HEK293T (cell line): ENCODE measurements at regions of chr15 and their contacts with region 1.

Region 1: DNA sequence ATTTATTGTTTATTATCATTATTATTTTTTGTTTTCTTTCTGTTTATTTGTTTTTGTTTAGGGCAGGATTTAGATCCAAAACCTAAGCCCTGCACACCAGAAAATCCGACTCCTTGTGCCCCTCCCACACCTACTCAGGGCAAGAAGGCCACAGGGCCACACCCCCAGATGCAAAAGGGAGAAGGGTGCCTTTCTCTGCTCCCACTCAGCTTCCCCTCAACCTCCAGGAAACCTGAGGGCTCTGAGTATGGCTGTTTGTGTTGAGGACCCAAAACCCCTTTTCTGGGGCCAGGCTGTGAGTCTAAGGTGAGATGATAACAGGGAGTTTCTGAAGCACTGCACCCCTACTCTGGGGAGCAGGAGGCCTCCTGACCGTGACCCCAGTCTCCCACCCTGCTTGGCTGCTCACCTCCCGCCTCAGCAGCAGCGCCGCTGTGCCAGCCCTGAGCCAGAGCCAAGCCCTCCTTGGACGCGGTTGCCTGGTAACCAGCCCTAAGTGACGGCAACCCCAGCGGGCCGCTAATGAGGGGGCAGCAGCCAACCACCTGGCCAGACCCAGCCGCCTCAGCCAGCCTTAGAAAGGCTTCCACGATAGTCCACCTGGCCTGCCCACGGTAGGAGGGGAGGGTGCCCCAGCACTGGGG is 6.4 kb upstream of the C15orf39 start:
- DNase-seq: no peak

Region 2: DNA sequence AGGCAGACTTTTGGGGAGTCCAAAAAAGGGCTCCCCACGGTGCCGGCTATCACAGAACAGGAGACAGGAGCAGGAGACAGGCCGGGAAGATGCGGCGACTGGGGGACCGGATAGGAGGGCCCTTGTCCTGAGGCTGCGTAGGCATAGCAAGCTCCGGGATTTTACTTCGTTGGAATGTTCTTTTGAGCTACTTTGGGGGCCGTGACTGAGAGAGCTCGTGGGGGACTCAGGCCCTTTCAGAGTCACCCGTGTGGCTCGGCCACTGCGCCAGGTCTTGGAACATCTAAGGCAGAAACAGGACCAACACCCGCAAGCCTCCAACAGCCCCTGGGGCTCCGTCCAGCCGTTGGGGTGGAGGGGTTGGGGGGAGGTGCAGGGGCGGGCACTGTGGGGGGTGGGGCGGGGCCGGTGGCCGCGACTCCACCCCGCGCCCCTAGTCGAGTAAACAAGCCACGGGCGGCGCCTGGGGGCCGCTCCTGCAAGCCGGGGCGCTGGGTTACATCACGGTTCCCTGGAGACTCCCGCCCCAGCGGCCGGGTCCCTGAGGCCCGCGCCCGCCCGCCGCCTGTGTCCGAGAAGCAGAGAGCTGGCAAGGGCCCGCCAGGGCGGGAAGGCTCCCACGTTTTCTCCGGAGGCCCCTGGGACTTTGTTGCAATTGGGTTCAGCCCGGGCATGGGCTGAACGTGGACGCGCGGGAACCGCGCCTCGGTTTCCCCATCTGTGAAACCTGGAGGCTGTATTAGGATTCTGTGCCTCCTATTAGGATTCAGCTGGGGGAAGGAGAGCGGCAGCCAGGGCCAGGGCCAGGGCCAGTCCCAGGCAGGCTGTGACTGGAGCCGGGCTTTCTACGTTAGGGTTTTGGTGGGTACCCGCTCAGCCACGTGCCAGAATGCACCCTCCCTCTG is 16.8 kb before region 1 on chr15:
- CTCF ChIA-PET with region 1: interaction called, 10 read pairs
- POLR2A ChIA-PET with region 1: interaction called, 6 read pairs
- DNase-seq: no peak